Common myeloid progenitor, CD34-positive (primary cell): ENCODE measurements at regions of chr6 and their contacts with region 1.

Region 1: DNA sequence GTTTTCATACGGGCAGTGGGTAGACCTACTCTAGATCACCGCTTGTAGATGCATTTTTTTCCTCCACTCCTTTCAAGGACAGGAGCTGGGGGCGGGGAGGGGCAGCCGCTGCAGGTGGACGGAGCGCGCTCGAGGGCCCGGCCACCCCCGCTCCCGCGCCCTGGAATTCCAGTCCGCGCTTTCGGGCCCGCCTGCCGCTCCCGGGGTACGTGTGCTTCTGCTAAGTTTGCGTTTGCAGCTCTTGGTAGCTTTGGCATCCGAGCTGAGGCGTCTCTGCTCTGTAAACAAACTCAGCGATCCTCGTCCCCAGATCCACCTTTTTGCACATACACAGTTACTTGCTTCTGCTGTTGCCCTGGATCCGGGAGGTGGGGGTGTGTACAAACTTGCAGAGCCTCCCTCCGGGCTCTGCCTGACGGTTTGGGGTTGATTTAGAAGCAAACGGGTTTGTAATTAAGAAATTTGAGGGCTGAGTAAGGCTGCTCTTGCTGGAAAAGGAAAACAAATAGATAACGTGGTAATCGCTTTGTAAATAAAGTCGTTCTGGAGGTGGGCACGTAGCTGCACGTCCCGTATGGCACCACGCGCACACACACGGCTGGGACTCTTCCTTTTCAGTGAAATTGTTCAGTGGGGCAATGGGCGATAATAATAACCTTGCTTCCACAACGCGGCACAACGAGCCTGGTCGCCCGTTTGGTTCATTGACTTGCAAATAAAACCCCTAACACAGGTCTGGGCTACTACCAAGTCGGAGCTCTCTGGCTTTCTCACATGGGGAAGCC is 976 bp upstream of the CITED2 start:
- DNase-seq: peak; percentile 96 to 99 (median 98)
- H3K4me3 ChIP-seq: peak overlapping the region; percentile 95 to 100 (median 98)
- H3K27ac ChIP-seq: peak overlapping the region; percentile 80 to 93
- H3K4me1 ChIP-seq: peaks cover 24 to 43% (median 32%) of the 10 kb centered on the region in 4 experiments
- H3K27me3 ChIP-seq: no peaks in the 10 kb centered on the region

Region 2: DNA sequence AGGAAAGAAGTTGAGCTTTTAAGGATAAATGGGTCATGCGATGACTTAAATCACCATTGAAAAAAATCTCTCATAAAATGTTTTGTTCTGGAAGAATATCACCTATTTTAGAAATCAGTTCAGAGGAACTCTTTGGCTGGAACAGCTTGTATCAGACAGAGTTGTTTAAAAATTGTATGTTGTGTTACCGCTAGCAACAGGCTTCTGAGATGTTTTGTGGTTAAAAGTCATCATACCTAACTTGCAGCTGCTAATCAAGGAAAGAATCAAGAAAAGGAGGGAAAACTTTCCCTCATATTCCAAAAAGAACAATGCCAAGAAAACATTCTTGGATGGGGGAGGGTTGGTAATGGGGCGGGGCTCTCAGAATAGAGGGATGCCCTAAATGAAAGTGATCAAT is 219.8 kb after region 1 on chr6:
- CTCF ChIA-PET with region 1: no interaction called
- POLR2A ChIA-PET with region 1: interaction called, 10 read pairs
- DNase-seq: peak; percentile 39 to 84 (median 75)
- H3K4me3 ChIP-seq: no peak overlapping the region
- H3K27ac ChIP-seq: peak overlapping the region; percentile 37 to 68
- H3K4me1 ChIP-seq: peaks cover 11 to 36% (median 19%) of the 10 kb centered on the region in 4 experiments
- H3K27me3 ChIP-seq: no peaks in the 10 kb centered on the region

Region 3: DNA sequence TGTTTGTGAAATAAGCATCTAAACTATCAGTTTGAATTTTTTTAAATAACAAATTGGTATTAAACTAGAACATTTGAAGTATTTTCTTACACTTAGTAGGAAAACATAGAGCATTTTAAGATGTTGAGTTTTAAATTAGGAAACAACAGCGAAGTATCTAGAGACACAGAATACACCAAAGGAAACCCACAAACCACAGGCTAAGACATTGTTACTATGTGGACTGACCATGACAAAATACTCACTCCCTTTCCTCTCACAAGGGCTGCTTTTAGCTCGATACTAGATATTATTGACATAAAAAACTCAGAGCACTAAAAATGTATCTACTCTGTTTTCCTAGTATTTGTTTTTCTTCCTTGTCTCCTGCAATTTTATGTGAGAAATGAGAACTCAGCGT is 265.0 kb after region 1 on chr6:
- CTCF ChIA-PET with region 1: interaction called, 14 read pairs
- POLR2A ChIA-PET with region 1: interaction called, 10 read pairs
- DNase-seq: peak; percentile 74 to 91 (median 87)
- H3K4me3 ChIP-seq: peak overlapping the region in 4 of 7 experiments; percentile 8 to 57 (median 38)
- H3K27ac ChIP-seq: peak overlapping the region; percentile 46 to 69
- H3K4me1 ChIP-seq: peaks cover 18 to 64% (median 44%) of the 10 kb centered on the region in 4 experiments
- H3K27me3 ChIP-seq: no peaks in the 10 kb centered on the region